Panc1 (cell line): ENCODE measurements at regions of chrX and their contacts with region 1.

Region 1: DNA sequence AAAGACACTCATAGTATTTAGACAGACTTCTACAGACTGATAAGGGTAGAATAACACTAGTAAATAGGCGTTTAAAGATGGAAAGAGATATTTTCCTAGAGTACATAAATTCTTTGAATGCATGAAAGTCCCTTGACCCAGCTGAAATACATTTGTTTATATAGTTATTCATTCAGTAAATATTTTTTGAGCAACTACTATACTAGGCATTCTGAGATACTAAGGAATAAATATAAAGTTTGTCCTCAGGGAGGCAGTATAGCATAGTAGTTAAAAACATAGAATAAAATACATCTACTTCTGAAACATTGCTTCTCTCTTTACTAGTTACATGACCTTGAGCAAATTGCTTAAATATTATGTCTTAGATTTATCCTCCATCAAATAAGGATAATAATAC is 27.4 kb downstream of the HMGN5 start:
- DNase-seq: peak; percentile 22
- ATAC-seq: peak; percentile 70; the same call in 1 of the 2 replicates
- H3K4me3 ChIP-seq: no peak overlapping the region
- H3K27ac ChIP-seq: no peak overlapping the region
- H3K4me1 ChIP-seq: no peaks in the 10 kb centered on the region
- H3K27me3 ChIP-seq: no peaks in the 10 kb centered on the region
- CTCF ChIP-seq: peak; percentile 6; the same call in 1 of the 2 replicates

Region 2: DNA sequence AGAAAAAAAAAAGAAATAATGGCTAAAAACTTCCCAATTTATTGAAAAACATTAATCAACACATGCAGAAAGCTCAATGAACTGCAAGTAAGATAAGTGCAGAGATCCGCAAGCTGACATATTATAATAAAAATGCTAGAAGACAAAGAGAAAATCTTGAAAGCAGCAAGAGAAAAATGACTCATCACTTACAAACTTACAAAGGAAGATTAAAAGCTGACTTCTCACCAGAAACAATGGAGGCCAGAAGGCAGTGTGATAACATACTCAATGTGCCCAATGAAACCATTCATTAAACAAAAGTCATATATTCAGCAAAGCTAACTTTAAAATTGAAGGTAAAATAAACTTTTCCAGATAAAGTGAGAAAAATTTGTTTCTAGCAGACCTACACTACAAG is 357.3 kb before region 1 on chrX:
- CTCF ChIA-PET with region 1: no interaction called
- POLR2A ChIA-PET with region 1: no interaction called
- in situ Hi-C with region 1: no loop called
- intact Hi-C with region 1: no loop called
- DNase-seq: no peak
- ATAC-seq: no peak
- H3K4me3 ChIP-seq: no peak overlapping the region
- H3K27ac ChIP-seq: no peak overlapping the region
- H3K4me1 ChIP-seq: no peaks in the 10 kb centered on the region
- H3K27me3 ChIP-seq: no peaks in the 10 kb centered on the region
- CTCF ChIP-seq: no peak

Region 3: DNA sequence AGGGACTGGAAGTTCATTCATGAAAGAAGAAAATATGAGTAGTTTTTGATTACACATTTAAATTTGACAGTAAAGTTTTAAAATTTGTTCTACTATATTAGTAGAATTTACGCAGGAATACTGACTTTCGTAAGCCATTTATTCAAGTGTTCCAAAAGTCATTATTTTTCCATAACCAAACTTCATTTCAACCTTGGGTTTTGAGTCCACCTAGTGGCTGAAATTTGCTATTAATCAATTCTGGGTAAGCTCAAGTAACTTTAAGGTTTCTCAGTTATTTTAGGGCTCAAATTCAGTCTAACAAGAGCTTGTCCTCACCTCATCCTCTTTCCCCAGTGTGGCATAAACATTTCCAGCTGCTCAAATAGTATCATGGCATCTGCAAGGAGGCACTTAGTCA is 203.0 kb after region 1 on chrX:
- CTCF ChIA-PET with region 1: interaction called, 3 read pairs
- POLR2A ChIA-PET with region 1: no interaction called
- in situ Hi-C with region 1: no loop called
- intact Hi-C with region 1: loop called (anchors 2 kb)
- DNase-seq: peak; percentile 2
- ATAC-seq: no peak
- H3K4me3 ChIP-seq: no peak overlapping the region
- H3K27ac ChIP-seq: no peak overlapping the region
- H3K4me1 ChIP-seq: no peaks in the 10 kb centered on the region
- H3K27me3 ChIP-seq: no peaks in the 10 kb centered on the region
- CTCF ChIP-seq: peak; percentile 61; the same call in 1 of the 2 replicates